Activated CD4-positive, alpha-beta T cell treated with anti-CD3 and anti-CD28 coated beads for 36 hours (primary cell): ENCODE measurements at regions of chr4 and their contacts with region 1.

Region 1: GRCh38 chr4:36394352-36394903 is 113.0 kb downstream of the DTHD1 start:
- DNase-seq: peak; percentile 60
- ATAC-seq: peak; percentile 94
- H3K4me3 Mint-ChIP-seq: peak overlapping the region; percentile 25
- H3K27ac Mint-ChIP-seq: peak overlapping the region; percentile 93
- H3K4me1 Mint-ChIP-seq: peaks cover 20% of the 10 kb centered on the region
- H3K27me3 Mint-ChIP-seq: no peaks in the 10 kb centered on the region

Region 2: DNA sequence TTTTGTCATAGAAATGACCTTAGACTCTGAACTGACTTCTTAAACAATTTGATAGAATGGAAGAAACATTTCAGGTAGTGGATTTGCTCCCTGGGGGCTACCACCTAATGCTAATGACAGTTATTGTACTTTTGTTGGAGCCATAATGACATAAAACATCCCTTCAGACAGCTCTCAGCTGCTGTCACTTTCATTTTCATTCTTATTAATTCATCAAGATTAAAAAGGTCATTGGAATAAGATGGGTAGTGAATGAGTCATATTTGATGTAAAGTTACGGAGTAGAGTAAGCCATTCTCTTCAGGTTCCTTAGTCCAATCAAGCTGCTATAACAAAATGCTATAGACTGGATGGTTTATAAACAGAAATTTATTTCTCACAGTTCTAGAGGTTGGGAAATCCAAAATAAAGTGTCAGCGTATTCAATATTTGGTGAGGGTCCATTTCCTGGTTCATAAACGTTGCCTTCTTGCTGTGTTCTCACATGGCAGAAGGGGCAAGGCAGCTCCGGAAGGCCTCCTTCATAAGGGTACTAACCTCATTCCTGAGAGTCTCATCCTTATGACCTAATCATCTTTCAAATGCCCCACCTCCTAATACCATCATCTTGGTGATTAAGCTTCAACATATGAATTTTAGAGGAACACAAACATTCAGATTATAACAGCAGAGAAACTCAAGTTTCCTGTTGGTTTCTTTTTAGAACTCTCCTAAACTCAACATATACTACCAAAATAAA is 418.6 kb before region 1 on chr4:
- CTCF ChIA-PET with region 1: no interaction called
- POLR2A ChIA-PET with region 1: no interaction called
- intact Hi-C with region 1: loop called (anchors 1 kb)
- DNase-seq: no peak
- ATAC-seq: peak; percentile 95
- H3K4me3 Mint-ChIP-seq: no peak overlapping the region
- H3K27ac Mint-ChIP-seq: no peak overlapping the region
- H3K4me1 Mint-ChIP-seq: peaks cover 14% of the 10 kb centered on the region
- H3K27me3 Mint-ChIP-seq: peaks cover 4% of the 10 kb centered on the region

Region 3: GRCh38 chr4:36244257-36245079 is 150.0 kb before region 1 on chr4 and contains the start of gene ARAP2:
- CTCF ChIA-PET with region 1: interaction called, 8 read pairs
- POLR2A ChIA-PET with region 1: no interaction called
- intact Hi-C with region 1: loop called (anchors 2 to 5 kb)
- DNase-seq: peak; percentile 84
- ATAC-seq: peak; percentile 72
- H3K4me3 Mint-ChIP-seq: peak within 1 kb of the TSS; percentile 87
- H3K27ac Mint-ChIP-seq: peak within 1 kb of the TSS; percentile 93
- H3K4me1 Mint-ChIP-seq: peaks cover 36% of the 10 kb centered on the region
- H3K27me3 Mint-ChIP-seq: no peaks in the 10 kb centered on the region
- total RNA-seq, gene ARAP2: 40.0 to 42.5 TPM

Region 4: DNA sequence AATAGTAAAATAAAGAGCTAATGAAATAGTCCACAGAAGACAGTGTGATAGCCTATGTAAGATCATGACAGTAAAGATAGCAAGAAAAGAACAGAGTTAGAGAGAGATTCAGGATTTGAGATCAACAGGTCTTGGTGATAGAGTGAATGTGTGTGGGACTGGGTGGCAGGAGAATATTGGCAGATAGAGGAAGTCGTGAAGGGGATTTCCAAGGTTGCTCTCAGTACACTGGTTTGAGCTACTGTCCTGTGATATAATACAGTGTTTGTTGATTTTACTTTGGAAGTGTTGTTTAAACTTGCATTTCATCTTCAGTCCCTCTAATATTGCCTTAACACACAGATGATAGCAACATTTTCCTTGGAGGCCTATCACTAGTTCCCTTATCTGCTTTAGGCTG is 68.9 kb before region 1 on chr4:
- CTCF ChIA-PET with region 1: interaction called, 6 read pairs
- POLR2A ChIA-PET with region 1: no interaction called
- intact Hi-C with region 1: loop called (anchors 1 kb)
- DNase-seq: no peak
- ATAC-seq: peak; percentile 43
- H3K4me3 Mint-ChIP-seq: no peak overlapping the region
- H3K27ac Mint-ChIP-seq: peak overlapping the region; percentile 86
- H3K4me1 Mint-ChIP-seq: peaks cover 66% of the 10 kb centered on the region
- H3K27me3 Mint-ChIP-seq: no peaks in the 10 kb centered on the region

Region 5: DNA sequence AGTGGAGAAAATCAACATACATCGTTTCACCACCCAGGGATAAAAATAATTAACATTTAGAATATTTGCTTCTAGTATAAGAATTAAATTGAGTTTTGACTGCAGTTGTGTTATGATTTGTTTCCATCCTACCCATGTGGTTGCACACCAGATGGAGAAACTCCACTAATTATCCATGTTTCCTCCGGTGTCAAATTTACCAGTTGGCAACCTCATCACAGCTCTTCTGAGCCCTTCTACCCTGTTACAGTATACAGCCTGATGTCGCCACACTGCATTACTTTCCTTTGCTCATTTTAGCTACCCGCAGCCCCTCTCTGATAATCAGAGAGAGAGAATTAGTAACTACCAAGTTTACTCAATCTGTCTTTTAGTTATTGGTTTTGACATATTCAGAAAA is 298.2 kb after region 1 on chr4:
- CTCF ChIA-PET with region 1: no interaction called
- POLR2A ChIA-PET with region 1: no interaction called
- intact Hi-C with region 1: no loop called
- DNase-seq: no peak
- ATAC-seq: no peak
- H3K4me3 Mint-ChIP-seq: no peak overlapping the region
- H3K27ac Mint-ChIP-seq: no peak overlapping the region
- H3K4me1 Mint-ChIP-seq: no peaks in the 10 kb centered on the region
- H3K27me3 Mint-ChIP-seq: no peaks in the 10 kb centered on the region